ENCODE measurements at regions of chr1 and their contacts with region 1.

Region 1: GRCh38 chr1:16187748-16188401 is 24.6 kb downstream of the ARHGEF19 start:
- DNase-seq: peak; percentile 78 to 95
- ATAC-seq: peak; percentile 89
- H3K4me3 ChIP-seq: no peak overlapping the region
- H3K27ac ChIP-seq: no peak overlapping the region
- H3K4me1 ChIP-seq: no peaks in the 10 kb centered on the region
- H3K27me3 ChIP-seq: no peaks in the 10 kb centered on the region

Region 2: GRCh38 chr1:16078925-16079656 is 108.8 kb before region 1 on chr1:
- intact Hi-C with region 1: loop called (anchors 1 to 2 kb)
- DNase-seq: peak; percentile 84 to 92
- ATAC-seq: peak; percentile 80
- H3K4me3 ChIP-seq: no peak overlapping the region
- H3K27ac ChIP-seq: no peak overlapping the region
- H3K4me1 ChIP-seq: no peaks in the 10 kb centered on the region
- H3K27me3 ChIP-seq: no peaks in the 10 kb centered on the region

Measured in aorta (tissue), 5 donors.